Left colon (tissue), 2 donors: ENCODE measurements at regions of chr1 and their contacts with region 1.

Region 1: GRCh38 chr1:15272009-15272788 is 25.2 kb downstream of the FHAD1 start:
- DNase-seq: peak; percentile 64 to 72
- ATAC-seq: peak; percentile 87

Region 2: GRCh38 chr1:14486401-14487201 is 785.6 kb before region 1 on chr1:
- intact Hi-C with region 1: no loop called
- DNase-seq: no peak
- ATAC-seq: no peak

Region 3: DNA sequence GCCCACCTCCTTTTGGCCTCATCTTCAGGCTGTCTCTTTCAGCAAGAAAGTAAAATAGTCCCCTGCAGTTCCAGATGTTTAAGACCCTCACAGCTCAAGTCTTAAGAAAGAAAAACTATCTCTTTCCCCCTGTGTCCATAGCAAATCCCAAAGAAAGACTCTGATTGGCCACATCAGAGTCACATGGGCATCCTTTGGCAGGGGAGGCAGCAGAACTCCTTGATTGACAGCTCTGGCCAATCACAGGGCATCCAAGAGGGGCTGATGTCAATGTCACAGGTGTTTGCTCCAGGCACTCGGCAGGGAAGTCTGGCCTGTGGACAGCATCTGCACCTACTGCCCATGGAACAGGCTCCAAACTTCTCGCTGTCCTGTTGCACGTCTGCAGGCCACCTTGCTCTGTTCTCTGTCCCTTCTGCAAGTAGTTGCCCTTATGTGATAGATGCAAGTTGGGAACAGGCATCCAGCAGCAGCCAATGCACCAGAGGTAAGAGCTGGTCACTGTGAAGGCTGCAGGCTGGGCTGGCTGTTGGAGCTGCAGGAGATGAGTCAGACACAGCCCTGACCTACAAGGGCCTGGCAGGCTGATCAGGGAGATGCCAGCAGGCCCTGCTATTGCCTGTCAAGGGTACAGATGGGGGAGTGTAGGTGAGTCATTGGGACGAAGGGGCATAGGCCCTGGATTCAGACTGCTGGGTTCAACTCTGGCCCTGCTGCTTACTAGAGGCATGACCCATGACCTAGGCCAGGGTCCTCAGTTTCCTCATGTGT is 215.5 kb before region 1 on chr1:
- intact Hi-C with region 1: no loop called
- DNase-seq: no peak
- ATAC-seq: no peak

Region 4: DNA sequence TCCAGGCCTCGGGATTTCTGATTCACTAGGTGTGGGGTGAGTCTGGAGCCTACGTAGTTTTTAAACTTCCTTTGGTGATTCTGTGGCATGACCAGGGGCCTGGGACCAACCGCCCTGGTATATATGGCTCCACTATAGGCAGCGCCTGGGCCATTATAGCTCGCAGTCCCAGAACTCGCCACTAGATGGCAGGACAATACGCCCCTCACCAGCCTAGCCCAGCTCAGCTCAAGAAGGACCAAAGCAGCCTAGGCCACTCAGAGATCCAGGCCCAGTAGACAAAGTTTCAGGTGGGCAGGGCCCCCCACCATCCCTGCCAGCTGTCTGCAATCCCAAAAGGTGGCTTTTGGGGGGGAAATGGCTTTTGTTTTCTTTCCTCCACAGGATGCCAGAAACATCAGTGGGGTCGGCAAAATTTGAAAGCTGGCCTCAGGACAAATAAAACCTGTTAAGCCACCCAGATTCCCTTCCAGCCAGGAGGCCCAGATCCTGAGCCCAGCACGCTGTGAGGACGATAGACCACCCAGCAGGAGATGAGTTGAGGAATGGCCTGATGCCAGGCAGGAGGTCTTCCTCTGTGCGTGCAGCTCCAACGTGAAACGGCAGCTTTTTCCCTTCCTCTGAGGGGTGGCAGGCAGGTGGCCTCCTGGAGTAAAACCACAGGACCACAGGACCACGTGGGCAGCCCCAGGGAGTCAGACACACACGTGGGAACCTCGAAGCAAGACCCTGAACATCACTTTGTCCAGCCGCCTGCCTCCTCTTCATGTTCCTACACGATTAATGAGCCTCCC is 143.5 kb before region 1 on chr1:
- intact Hi-C with region 1: loop called in 1 of 2 experiments (anchors 10 kb)
- DNase-seq: peak in 1 of 2 donors; percentile 85
- ATAC-seq: peak; percentile 96

Region 5: DNA sequence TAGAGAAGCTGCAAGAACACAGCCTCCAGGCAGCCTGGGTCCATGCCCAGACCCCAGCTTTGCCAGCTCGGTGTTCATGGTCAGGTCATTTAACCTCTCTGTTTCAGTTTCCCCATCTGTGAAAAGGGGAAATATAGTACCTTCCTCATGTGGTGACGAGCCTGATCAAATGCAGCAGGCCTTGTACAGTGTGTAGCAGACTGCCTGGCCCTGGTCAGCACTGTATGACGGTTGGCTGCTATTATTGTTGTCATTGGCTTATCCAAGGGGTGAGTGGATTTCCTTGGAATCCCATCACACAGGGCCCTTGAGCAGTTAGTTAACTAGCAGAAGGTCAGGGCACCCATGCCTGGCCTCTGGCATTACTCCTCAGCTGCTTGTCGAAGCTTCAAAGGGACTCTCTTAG is 125.2 kb before region 1 on chr1:
- intact Hi-C with region 1: loop called (anchors 5 to 10 kb)
- DNase-seq: no peak
- ATAC-seq: no peak

Region 6: DNA sequence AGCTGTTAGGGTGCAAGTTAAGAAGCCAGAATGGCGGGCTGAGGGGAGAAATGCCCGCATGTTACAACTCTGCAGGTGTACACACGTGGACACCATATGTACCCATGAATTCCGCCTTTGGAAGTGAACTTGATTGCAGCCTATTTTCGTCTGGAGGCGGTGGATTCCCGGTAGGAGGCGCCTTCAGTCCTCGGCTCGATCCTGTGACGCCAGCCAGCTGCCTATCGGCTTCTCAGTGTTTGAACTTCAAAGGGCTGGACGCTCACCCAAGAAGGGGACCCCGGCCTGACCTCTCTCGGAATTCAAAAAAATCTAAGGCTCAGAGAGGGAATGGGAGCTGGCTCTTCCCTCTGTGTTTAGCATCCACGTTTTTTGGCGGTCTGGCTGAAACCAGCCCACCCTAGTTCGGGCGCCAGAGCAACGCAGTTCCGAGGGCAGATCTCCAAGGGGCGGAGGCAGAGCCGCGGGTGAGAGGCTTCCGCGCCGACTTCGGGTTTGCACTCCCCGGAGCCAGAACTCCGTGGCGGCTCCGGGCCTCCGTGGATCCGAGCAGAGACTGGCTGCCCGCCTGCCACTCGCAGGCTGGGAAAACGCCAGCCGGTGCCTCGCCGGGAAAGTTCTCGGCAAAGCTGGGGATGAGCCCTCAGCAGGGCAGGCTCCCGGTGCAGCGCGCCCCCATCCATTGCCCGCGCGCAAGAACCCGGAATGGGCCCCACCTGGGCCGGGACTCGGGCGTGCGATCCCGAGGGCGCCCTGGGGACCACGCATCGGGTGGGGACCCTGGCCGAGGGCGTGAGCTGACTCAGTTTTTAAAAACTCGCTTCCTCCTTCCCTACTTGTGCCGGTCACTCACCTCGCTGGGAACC is 119.6 kb before region 1 on chr1:
- intact Hi-C with region 1: loop called (anchors 5 to 10 kb)
- DNase-seq: peak; percentile 88 to 90
- ATAC-seq: peak; percentile 63